ENCODE measurements at regions of chr12 and their contacts with region 1.

Region 1: GRCh38 chr12:68223083-68223747 is 2.4 kb downstream of the IL26 start:
- DNase-seq: peak; percentile 78
- H3K4me3 ChIP-seq: no peak overlapping the region
- H3K27ac ChIP-seq: no peak overlapping the region
- H3K4me1 ChIP-seq: peaks cover 3% of the 10 kb centered on the region
- CTCF ChIP-seq: peak; percentile 96

Region 2: DNA sequence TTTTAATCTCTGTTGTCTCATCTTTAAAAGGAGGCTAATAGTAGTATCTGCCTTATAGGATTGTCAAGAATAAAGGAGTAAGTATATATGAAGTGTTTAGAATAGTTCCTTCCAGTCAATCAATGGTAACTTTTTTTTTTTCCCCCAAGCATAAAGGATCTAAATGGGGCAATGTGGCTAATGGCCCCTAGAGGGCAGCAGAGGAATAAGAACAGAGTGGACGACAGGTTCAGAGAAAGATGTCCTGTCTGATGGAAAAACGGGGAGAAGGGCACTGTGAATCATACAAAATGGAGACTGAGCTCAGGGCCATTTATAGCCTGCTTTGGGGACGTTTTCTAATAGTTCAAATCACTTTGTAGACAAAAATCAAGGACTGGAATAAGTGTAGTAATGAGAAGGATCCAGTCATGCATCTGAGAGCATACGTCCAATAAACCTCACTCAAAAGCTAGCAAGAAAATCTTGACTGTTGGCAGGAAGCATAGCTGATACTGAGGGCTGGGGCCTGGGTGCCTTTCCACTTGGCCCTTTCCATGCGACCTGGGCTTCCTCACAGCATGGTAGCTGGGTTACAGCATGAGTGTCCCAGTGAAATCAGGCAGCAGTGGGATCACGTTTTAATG is 182.7 kb before region 1 on chr12:
- CTCF ChIA-PET with region 1: no interaction called
- POLR2A ChIA-PET with region 1: interaction called, 5 read pairs
- intact Hi-C with region 1: loop called (anchors 2 kb)
- DNase-seq: peak; percentile 68
- H3K4me3 ChIP-seq: no peak overlapping the region
- H3K27ac ChIP-seq: no peak overlapping the region
- H3K4me1 ChIP-seq: no peaks in the 10 kb centered on the region
- CTCF ChIP-seq: peak; percentile 99

Region 3: DNA sequence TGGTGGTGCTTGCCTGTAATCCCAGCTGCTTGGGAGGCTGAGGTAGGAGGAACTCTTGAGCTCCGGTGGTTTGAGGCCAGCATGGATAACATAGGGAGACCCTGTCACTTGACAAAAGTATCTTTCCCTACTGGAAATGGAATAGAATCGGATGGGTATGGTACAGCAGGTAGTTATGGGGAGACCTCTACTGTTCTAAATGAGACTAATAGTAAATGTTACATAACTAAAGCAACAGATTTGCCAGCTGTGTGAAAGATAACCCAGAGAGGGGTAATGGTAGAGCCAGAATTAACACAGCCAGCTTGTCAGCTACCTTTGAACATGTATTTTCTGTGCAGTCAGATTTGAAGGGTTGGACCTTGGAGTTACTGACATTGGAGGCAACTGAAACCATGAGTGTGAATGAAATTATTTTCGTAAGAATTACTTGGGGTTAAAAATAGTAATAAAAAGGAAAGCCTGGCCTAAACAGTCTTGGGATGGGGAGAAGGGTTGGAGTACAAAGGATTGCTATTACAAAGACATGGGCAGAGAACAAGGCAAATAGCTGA is 441.9 kb after region 1 on chr12:
- CTCF ChIA-PET with region 1: no interaction called
- POLR2A ChIA-PET with region 1: no interaction called
- intact Hi-C with region 1: loop called (anchors 10 kb)
- DNase-seq: no peak
- H3K4me3 ChIP-seq: no peak overlapping the region
- H3K27ac ChIP-seq: no peak overlapping the region
- H3K4me1 ChIP-seq: peaks cover 24% of the 10 kb centered on the region
- CTCF ChIP-seq: peak; percentile 40; the same call in 1 of the 2 replicates